ENCODE measurements at regions of chr22 and their contacts with region 1.

Region 1: GRCh38 chr22:41822317-41823060 is 10.4 kb upstream of the SREBF2 start:
- DNase-seq: peak in 1 of 2 experiments; percentile 90
- H3K4me3 ChIP-seq: no peak overlapping the region
- H3K27ac ChIP-seq: no peak overlapping the region
- H3K4me1 ChIP-seq: peaks cover 9% of the 10 kb centered on the region
- H3K27me3 ChIP-seq: no peaks in the 10 kb centered on the region
- CTCF ChIP-seq: peak; percentile 90

Region 2: DNA sequence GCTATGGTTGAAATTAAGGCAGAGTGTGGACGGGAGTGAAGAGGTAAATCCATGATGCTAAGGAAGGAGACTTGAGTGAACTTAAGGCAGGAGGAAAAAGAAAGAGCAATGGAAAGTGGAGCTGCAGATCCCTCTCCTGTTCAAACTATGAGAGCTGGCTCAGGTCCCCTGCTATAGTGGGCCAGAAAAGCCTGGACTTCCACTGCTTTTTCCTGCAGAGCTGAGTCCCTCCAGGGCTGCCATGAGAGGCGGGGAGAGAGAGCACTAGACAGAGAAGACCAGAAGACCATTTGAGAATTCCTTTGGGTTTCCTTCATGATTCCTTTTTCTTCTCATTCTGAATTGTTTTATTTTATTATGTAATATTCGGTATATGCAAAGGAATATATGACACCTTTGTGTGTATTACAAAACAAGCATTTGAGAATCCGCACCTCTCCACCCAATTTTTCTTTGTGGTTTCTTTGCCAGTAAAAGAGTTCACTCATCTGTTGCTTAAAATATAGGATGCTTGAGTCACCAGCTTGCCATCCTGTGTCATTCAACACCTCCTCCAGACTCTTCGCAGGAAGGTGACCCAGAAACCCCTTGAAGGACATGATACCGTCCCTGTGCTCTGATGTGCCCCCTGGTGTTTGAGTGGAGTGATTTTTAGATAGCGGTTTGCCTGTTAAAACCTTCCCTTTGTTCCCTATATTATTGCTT is 34.8 kb after region 1 on chr22:
- CTCF ChIA-PET with region 1: interaction called, 15 read pairs
- POLR2A ChIA-PET with region 1: no interaction called
- intact Hi-C with region 1: loop called (anchors 1 kb)
- DNase-seq: peak; percentile 67 to 97
- H3K4me3 ChIP-seq: no peak overlapping the region
- H3K27ac ChIP-seq: peak overlapping the region; percentile 76
- H3K4me1 ChIP-seq: peaks cover 51% of the 10 kb centered on the region
- H3K27me3 ChIP-seq: no peaks in the 10 kb centered on the region
- CTCF ChIP-seq: peak; percentile 97

Region 3: DNA sequence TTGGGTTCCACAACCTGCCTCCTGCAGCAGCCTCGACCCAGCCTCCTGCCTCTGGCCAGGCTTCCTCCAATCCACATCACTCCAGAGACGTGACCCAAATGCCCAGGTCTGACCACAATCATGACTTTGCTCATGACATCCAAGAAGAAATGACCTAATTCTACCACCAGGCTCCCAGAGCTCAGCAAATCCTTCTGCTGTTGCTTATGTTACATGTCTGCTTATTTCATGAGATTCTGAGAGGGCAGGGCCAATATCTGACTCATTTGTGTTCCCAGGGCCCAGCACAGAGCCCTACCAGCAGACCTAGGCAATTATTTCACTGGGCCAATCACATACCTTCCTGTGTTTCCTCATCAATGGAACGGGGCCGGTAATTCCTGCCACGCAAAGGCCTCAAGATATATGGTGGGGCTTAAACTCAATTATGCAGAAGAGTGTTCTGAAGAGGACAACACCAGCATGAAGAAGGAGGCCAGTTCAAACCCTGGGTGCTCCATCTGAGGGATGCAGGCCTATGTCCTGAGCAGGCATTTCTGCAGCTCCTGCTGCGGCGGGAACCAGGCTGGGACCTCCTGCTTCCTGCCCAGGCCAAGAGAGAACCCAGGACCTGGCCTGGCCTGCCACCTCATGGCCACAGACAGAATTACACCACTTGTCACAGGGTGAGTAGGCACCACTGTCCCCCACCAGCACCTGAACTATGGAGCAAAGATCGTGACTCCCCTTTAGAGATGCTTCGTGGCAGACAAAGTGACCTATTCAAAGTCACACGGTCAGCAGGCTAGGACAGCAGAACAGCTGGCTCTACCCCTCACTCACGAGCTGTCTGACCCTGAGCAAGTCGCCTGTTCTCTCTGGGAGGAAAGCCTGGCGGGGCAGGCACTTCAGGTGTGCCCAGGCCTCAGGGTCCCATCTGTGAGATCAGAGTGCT is 118.6 kb after region 1 on chr22:
- CTCF ChIA-PET with region 1: no interaction called
- POLR2A ChIA-PET with region 1: no interaction called
- intact Hi-C with region 1: loop called (anchors 1 kb)
- DNase-seq: peak; percentile 63 to 84
- H3K4me3 ChIP-seq: no peak overlapping the region
- H3K27ac ChIP-seq: peak overlapping the region; percentile 58
- H3K4me1 ChIP-seq: peaks cover 11% of the 10 kb centered on the region
- H3K27me3 ChIP-seq: no peaks in the 10 kb centered on the region
- CTCF ChIP-seq: peak; percentile 98

Measured in PC-9 (cell line).